Activated B cell treated with CpG ODN at 0.5 μM for 24 hours (primary cell): ENCODE measurements at regions of chr22 and their contacts with region 1.

Region 1: GRCh38 chr22:39532215-39533071 is at the start of gene RPS19BP1:
- DNase-seq: peak; percentile 94
- ATAC-seq: peak; percentile 85
- H3K4me3 Mint-ChIP-seq: peak within 1 kb of the TSS; percentile 96
- H3K27ac Mint-ChIP-seq: peak within 1 kb of the TSS; percentile 94
- H3K4me1 Mint-ChIP-seq: peaks cover 56% of the 10 kb centered on the region
- H3K27me3 Mint-ChIP-seq: no peaks in the 10 kb centered on the region
- CTCF ChIP-seq: no peak
- total RNA-seq, gene RPS19BP1: 67.7 and 79.0 TPM in 2 replicates

Region 2: DNA sequence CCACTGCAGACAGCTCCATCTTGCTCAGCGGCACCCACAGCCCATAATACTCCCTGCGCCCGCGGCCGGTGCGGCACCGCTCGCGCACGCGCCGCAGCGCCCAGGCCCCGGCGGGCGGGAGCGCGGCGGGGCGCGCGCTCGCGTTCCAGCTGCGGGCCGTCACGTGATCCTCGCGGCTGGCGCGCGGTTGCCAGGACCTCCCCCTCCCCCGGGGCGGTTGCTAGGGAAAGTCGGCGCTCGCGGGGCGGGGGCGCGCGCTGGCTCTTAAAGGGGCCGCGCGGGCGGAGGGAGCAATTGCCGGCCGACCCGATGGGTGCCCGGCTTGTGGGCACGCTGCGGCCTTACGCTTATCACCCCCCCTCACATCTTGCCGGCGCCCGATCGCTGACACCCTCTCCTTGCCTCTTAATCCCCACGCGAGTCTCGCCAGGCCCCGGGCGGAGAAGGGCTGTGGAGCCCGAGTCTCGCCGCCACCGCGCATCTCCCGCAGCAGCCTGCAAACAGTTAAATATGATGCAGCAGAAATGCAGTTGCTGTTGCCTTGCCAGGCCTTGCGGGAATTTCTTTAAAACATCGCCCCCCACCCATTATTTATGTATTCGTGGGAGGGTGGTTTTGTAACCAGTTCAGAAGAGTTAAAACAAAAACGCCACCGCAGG is 660.1 kb before region 1 on chr22 and contains the start of gene CBX6:
- CTCF ChIA-PET with region 1: no interaction called
- POLR2A ChIA-PET with region 1: interaction called, 3 read pairs
- intact Hi-C with region 1: loop called (anchors 5 kb)
- DNase-seq: peak; percentile 97
- ATAC-seq: peak; percentile 73
- H3K4me3 Mint-ChIP-seq: peak within 1 kb of the TSS; percentile 92
- H3K27ac Mint-ChIP-seq: peak within 1 kb of the TSS; percentile 83
- H3K4me1 Mint-ChIP-seq: peaks cover 53% of the 10 kb centered on the region
- H3K27me3 Mint-ChIP-seq: peaks cover 2% of the 10 kb centered on the region
- CTCF ChIP-seq: no peak
- total RNA-seq, gene CBX6: 65.6 and 71.8 TPM in 2 replicates

Region 3: DNA sequence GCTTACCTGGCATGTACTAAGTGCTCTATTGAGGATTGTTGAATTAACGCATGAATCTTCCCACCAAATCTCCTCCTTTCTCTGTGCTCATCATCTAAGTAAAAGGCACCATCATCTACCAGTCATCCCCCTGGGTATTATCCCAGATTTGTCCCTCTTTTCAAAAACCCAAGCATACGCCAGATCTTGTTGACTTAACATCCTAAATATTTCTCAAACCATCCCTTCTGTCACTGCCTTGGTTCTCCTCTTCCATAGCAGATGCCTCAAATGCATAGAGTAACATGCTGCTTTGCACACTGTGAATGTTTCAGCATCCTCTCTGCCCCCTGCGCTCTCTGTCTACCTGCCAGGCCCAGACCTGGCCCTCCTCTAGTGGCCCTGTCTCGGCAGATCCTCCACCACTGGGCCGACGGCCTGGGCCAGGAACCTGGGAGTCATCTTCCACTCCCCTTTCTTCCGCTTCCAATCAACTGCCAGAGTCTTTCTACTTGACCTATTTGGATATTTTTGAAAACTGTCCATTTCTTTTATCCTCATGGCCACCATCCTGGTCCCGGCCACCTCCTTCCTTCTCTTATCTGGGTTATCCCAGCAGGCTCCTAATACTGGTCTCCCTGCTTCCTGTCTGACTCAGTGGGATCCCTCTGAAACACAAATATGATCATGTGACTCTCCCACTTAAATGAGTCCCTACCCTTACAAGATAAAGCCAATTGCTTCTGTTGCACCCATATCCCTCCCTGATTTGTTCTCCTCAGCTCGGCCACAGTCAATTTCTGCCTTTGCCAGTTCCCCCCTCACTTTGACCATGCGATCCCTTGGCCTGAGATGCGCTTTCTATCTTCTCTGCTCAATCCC is 136.3 kb before region 1 on chr22:
- CTCF ChIA-PET with region 1: interaction called, 22 read pairs
- POLR2A ChIA-PET with region 1: interaction called, 9 read pairs
- intact Hi-C with region 1: loop called (anchors 1 kb)
- DNase-seq: no peak
- ATAC-seq: no peak
- H3K4me3 Mint-ChIP-seq: no peak overlapping the region
- H3K27ac Mint-ChIP-seq: no peak overlapping the region
- H3K4me1 Mint-ChIP-seq: peaks cover 10% of the 10 kb centered on the region
- H3K27me3 Mint-ChIP-seq: no peaks in the 10 kb centered on the region
- CTCF ChIP-seq: no peak

Region 4: DNA sequence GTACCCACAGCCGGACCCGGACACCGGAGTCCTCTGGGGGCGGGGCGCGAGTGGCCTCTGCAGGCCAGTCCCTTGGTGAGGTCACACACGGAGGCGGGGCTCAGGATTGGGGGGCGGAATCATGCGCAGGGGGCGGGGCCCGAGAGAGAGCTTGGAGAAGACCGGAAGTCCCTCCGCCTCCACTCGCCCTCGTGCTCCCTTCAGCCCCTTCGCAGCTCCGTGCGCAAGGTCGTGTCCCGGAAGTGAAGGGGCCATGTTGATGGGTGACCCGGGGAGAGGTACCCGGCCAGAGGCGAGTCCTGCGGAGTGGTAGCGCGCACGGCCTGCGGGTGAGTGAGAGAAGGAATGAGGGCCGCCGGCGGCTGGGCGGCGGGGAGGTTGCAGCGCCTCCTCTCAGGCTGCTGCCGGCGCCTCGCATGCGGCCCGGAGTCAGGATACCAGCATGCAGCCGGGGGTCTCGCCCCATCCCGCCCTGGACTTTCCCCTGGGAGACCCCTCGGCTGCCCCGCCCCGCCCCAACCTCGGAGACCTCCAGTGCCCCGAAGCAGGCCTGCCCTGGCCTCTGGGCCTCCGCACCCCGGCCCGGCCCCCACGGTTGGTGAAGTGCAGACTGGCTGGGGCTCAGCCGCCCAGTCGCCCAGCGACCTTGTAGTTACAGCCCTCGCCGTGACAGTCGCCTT is 30.2 kb before region 1 on chr22 and contains the start of gene MIEF1:
- CTCF ChIA-PET with region 1: interaction called, 21 read pairs
- POLR2A ChIA-PET with region 1: interaction called, 12 read pairs
- intact Hi-C with region 1: loop called (anchors 1 kb)
- DNase-seq: peak; percentile 89
- ATAC-seq: peak; percentile 96
- H3K4me3 Mint-ChIP-seq: peak within 1 kb of the TSS; percentile 95
- H3K27ac Mint-ChIP-seq: peak within 1 kb of the TSS; percentile 89
- H3K4me1 Mint-ChIP-seq: peaks cover 34% of the 10 kb centered on the region
- H3K27me3 Mint-ChIP-seq: no peaks in the 10 kb centered on the region
- CTCF ChIP-seq: no peak
- total RNA-seq, gene MIEF1: 38.2 and 41.3 TPM in 2 replicates

Region 5: GRCh38 chr22:40024201-40025061 is 492.0 kb after region 1 on chr22:
- CTCF ChIA-PET with region 1: interaction called, 154 read pairs
- POLR2A ChIA-PET with region 1: interaction called, 10 read pairs
- intact Hi-C with region 1: loop called (anchors 1 kb)
- DNase-seq: peak; percentile 46
- ATAC-seq: peak; percentile 87
- H3K4me3 Mint-ChIP-seq: no peak overlapping the region
- H3K27ac Mint-ChIP-seq: no peak overlapping the region
- H3K4me1 Mint-ChIP-seq: peaks cover 5% of the 10 kb centered on the region
- H3K27me3 Mint-ChIP-seq: no peaks in the 10 kb centered on the region
- CTCF ChIP-seq: peak; percentile 50

Region 6: DNA sequence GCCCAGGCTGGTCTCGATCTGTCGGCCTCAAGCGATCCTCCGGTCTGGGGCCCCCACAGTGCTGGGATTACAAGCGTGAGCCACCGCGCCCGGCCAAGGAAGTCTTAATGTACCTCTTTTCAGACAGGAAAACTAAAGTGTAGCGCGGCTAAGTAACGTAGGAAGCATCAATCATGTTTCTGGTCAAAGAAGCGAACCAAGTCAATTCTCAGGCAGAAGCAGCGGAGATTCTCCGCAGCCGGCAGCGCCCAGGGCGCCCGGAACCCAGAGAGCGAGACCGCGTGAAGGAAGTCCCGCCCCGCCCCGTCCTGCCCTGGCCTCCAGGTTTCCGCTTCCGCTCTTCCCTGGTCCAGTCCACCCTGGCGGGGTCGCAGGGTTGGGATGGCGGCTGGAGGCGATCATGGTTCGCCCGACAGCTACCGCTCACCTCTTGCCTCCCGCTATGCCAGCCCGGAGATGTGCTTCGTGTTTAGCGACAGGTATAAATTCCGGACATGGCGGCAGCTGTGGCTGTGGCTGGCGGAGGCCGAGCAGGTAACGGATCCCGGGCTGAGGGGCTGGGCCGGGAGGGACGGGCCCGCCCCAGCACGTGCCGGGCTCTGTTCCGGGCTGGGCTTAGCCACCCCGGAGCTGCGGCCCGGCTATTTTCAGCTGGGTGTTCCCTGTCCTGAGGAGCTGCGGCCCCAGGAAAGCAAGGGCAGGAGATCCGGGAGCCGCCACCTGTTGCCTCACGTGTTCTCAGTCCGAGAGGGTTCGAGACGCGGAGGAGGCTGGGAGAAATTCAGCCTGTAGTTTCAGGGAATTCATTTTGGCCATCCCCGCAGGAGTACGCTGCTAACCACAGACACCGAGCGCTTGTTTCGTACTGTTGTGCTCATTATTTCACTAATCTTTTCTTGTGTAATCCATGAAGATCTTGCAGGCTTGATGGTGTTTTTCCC is 814.0 kb after region 1 on chr22 and contains the start of gene ADSL:
- CTCF ChIA-PET with region 1: interaction called, 9 read pairs
- POLR2A ChIA-PET with region 1: interaction called, 16 read pairs
- intact Hi-C with region 1: loop called (anchors 1 kb)
- DNase-seq: peak; percentile 85
- ATAC-seq: peak; percentile 91
- H3K4me3 Mint-ChIP-seq: peak within 1 kb of the TSS; percentile 98
- H3K27ac Mint-ChIP-seq: peak within 1 kb of the TSS; percentile 98
- H3K4me1 Mint-ChIP-seq: peaks cover 34% of the 10 kb centered on the region
- H3K27me3 Mint-ChIP-seq: no peaks in the 10 kb centered on the region
- CTCF ChIP-seq: no peak
- total RNA-seq, gene ADSL: 102 and 109 TPM in 2 replicates